Mammary epithelial cell (primary cell): ENCODE measurements at regions of chr7 and their contacts with region 1.

Region 1: GRCh38 chr7:110130669-110131068 is 960.3 kb upstream of the LRRN3 start:
- DNase-seq: no peak
- H3K4me3 ChIP-seq: no peak overlapping the region
- H3K27ac ChIP-seq: no peak overlapping the region
- H3K4me1 ChIP-seq: no peaks in the 10 kb centered on the region
- H3K27me3 ChIP-seq: no peaks in the 10 kb centered on the region
- CTCF ChIP-seq: peak; percentile 12 to 47

Region 2: GRCh38 chr7:110003827-110004226 is 126.8 kb before region 1 on chr7:
- CTCF ChIA-PET with region 1: no interaction called
- dilution Hi-C with region 1: no loop called
- in situ Hi-C with region 1: no loop called
- intact Hi-C with region 1: loop called (anchors 10 kb)
- DNase-seq: no peak
- H3K4me3 ChIP-seq: no peak overlapping the region
- H3K27ac ChIP-seq: no peak overlapping the region
- H3K4me1 ChIP-seq: peaks cover 10% of the 10 kb centered on the region
- H3K27me3 ChIP-seq: no peaks in the 10 kb centered on the region
- CTCF ChIP-seq: peak in 1 of 2 donors; percentile 44